Kidney (tissue), 22 donors: ENCODE measurements at regions of chr19 and their contacts with region 1.

Region 1: DNA sequence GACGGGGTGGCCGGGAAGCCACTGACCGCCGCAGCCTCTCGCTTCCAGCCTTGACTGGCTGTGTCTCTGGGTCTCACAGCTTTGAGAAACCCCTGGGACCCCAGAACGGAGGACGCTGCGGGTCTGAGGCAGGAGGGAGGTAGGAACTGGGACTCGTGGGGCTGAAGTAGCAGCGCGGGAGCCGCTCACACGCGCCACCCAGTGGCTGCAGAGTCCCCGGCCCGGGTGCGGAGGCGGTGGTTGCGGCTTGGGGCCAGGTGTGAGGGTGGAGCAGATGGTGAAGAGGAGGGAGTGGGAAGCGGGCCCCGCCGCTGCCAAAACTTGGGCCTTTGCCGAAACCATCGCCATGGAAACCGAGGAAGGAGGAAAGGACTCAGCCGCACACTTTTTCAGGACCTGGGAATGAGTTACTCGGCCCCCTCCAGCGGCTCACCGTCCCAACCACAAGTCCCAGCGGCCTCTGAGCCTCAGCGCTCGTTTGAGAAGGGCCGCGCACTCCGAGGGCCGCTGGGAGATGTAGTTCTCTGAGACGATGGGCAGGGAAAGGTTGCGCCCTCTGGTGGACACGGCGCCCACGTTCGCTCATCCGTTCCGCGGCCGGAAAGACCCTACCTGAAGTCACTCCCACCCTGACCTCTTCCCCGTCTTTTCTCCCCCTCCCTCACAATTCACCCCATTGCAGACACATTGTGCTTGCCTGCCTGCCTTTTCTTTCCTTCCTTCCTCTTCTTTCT is 2.2 kb upstream of the SLC17A7 start:
- DNase-seq: peak; percentile 95 to 98 (median 97)
- H3K4me3 ChIP-seq: peak overlapping the region; percentile 51 to 63 (median 58)
- H3K27ac ChIP-seq: peak overlapping the region; percentile 74 to 78
- H3K4me1 ChIP-seq: peaks cover 0 to 2% (median 0%) of the 10 kb centered on the region in 3 donors
- H3K27me3 ChIP-seq: peaks cover 27% of the 10 kb centered on the region
- CTCF ChIP-seq: peak; percentile 91

Region 2: DNA sequence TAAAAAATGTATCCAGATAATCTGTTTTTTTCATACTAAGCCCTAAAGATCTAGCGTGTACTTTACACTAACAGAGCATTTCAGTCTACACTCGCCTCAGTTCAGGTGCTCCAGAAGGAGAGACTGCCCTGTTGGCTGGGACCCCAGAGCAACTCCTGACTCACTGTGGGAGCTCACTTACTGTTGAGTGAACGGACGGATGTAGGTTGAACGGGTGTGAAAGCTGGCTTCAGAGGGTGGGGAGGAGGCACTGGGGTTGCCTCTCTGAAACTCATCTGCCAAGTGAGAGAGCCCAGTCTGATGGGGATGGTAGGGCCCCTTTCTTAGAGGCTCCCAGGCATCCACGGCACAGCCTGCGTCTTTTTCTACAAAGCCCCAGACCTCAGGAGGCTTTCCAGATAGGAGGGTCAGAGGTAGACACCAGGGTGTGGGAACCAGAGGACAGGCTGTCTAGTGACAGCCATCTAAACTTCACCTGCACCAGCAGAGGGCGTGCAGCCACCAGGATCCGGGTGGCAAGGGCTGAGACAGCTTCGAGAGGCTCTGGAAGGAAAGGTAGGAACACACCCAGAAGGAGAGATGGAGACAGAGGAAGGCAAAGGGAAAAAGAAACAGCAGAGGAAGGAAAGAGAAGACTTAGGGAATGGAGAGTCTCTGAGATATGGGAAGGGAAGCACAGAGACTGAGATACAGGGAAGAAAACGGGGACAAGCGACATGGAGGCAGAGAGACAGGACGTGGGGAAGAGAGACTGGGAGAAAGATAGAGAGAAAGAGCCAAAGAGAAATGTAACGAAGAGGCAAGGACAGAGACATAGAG is 51.7 kb before region 1 on chr19:
- intact Hi-C with region 1: loop called (anchors 10 kb)
- DNase-seq: peak; percentile 84 to 93 (median 89)
- H3K4me3 ChIP-seq: no peak overlapping the region
- H3K27ac ChIP-seq: no peak overlapping the region
- H3K4me1 ChIP-seq: no peaks in the 10 kb centered on the region
- H3K27me3 ChIP-seq: no peaks in the 10 kb centered on the region
- CTCF ChIP-seq: peak; percentile 80

Region 3: DNA sequence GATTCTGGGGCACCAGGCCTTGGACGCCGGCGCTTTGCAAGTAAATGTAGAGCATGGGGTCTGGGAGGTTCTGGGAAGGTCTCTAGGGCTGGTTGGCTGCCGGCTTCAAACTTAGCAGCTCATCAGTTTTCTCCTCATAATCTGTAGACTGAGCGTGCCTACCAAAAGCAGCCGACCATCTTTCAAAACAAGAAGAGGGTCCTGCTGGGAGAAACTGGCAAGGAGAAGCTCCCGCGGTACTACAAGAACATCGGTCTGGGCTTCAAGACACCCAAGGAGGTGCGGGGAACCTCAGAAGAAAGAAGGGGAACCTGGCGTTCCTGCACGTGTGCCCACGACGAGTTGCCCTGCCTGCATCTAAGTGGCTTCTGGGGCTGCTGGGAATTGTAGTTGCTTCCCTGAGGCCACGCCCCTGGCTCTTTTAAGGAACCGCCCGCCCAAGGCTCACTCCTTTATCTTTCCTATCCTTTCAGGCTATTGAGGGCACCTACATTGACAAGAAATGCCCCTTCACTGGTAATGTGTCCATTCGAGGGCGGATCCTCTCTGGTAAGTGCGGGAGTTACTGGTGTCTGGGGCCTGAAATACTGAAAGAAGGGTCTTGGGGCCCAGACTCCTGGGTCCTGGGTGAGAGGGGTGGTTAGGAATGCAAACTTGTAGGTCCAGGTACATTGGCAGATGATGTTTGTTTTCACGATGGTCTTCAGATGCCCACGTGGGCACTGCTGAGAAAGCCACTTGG is 53.7 kb after region 1 on chr19:
- intact Hi-C with region 1: no loop called
- DNase-seq: peak in 3 of 5 donors; percentile 37 to 69 (median 68)
- H3K4me3 ChIP-seq: peak overlapping the region; percentile 92 to 99 (median 98)
- H3K27ac ChIP-seq: peak overlapping the region; percentile 75 to 90
- H3K4me1 ChIP-seq: peaks cover 4 to 20% (median 14%) of the 10 kb centered on the region in 3 donors
- H3K27me3 ChIP-seq: no peaks in the 10 kb centered on the region
- CTCF ChIP-seq: no peak